PC-3 (cell line): ENCODE measurements at regions of chr5 and their contacts with region 1.

Region 1: GRCh38 chr5:122723606-122724352 is 51.1 kb upstream of the SNX2 start:
- DNase-seq: peak; percentile 79
- ATAC-seq: peak; percentile 71
- H3K4me3 ChIP-seq: peak overlapping the region; percentile 39
- H3K27ac ChIP-seq: peak overlapping the region; percentile 66
- H3K4me1 ChIP-seq: peaks cover 30% of the 10 kb centered on the region
- H3K27me3 ChIP-seq: no peaks in the 10 kb centered on the region
- CTCF ChIP-seq: no peak

Region 2: DNA sequence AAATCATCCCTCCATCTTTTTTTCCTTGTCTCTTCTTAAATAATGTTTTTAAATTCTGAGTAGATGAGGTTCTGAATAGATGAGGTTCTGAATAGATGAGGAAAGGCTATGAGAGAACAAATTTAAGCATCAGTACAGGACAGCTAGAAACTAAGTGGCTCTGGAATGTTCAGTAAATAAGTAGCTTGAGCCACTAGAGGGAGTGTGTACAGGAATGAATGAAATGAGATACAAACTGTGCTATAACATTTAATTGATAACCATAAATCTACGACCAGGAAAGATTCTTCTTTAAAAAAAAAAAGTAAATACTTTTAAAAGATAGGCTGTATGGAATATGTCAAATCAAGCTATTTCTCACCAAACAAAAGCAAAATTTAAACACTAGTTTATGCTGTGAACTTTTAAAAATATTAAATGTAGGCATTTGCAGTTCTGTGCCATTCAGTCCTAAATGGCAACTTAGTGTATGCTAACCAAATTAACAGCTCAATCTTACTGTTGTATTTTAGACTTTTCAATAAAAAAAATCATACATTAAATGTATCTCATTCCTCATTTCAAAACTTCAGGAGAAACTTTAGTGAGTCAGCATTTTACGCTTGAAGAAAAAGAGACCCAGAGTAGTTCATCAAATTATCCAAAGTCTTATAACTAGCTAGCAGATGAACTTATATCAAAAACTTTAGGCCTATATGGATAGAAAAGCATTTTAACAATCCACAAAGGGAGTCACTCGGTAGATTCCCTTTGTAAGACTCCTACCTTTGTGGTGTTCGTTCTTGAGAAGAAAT is 19.3 kb before region 1 on chr5:
- CTCF ChIA-PET with region 1: no interaction called
- POLR2A ChIA-PET with region 1: no interaction called
- intact Hi-C with region 1: loop called (anchors 2 kb)
- DNase-seq: peak; percentile 70
- ATAC-seq: peak; percentile 80
- H3K4me3 ChIP-seq: no peak overlapping the region
- H3K27ac ChIP-seq: no peak overlapping the region
- H3K4me1 ChIP-seq: no peaks in the 10 kb centered on the region
- H3K27me3 ChIP-seq: no peaks in the 10 kb centered on the region
- CTCF ChIP-seq: peak; percentile 83

Region 3: GRCh38 chr5:122774861-122775549 is 51.2 kb after region 1 on chr5 and contains the start of gene SNX2:
- CTCF ChIA-PET with region 1: no interaction called
- POLR2A ChIA-PET with region 1: interaction called, 3 read pairs
- intact Hi-C with region 1: loop called (anchors 5 kb)
- DNase-seq: peak; percentile 85
- ATAC-seq: peak; percentile 88
- H3K4me3 ChIP-seq: peak within 1 kb of the TSS; percentile 92
- H3K27ac ChIP-seq: no peak within 1 kb of the TSS
- H3K4me1 ChIP-seq: peaks cover 10% of the 10 kb centered on the region; the same call in 1 of the 2 replicates
- H3K27me3 ChIP-seq: no peaks in the 10 kb centered on the region
- CTCF ChIP-seq: peak; percentile 22; the same call in 1 of the 2 replicates
- total RNA-seq, gene SNX2: 30.5 and 33.7 TPM in 2 replicates

Region 4: DNA sequence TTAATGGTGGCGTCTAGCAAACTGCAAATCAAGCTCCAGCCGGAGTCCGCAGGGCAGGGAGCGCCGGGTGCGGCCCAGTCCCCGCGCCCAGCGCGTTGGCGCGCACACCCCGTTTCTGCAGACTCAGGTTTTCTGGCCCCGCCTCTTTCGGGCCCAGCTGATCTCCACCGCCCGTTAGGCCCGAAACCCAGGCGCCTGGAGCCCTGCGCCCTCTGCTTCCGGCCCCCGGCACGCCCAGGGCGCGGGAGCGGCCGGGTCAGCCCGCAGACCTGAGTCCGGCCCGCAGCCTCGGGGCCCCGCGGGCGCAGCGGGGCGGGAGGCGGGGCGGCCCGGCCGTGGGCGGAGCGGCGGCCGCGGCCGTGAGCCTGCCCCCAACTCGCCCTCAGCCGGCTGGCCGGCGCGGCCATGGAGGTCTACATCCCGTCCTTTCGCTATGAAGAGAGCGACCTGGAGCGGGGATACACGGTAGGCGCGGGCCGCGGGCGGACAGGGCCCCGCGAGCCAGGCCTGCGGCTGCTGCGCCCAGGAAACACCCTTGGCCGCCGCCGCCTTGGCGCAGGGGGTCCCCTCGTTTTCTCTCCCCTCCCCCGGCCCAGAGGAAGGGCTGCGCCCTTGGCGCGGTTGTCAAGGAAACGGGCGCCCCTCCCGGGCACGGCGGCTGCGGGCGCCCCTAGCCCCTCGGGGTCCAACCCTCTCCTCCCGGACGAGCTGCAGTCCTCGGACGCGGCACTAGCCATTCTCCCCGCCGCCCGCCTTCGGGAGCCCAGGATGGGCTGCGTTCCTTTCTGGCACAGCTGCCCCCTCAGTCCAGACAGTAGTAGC is 121.7 kb after region 1 on chr5 and contains the start of gene SNX24:
- CTCF ChIA-PET with region 1: no interaction called
- POLR2A ChIA-PET with region 1: no interaction called
- intact Hi-C with region 1: loop called (anchors 1 kb)
- DNase-seq: peak; percentile 82
- ATAC-seq: peak; percentile 85
- H3K4me3 ChIP-seq: peak within 1 kb of the TSS; percentile 84
- H3K27ac ChIP-seq: peak within 1 kb of the TSS; percentile 43
- H3K4me1 ChIP-seq: peaks cover 47% of the 10 kb centered on the region
- H3K27me3 ChIP-seq: no peaks in the 10 kb centered on the region
- CTCF ChIP-seq: no peak
- total RNA-seq, gene SNX24: 7.4 and 10.3 TPM in 2 replicates

Region 5: GRCh38 chr5:123036391-123037103 is 312.8 kb after region 1 on chr5 and contains the start of gene PPIC:
- CTCF ChIA-PET with region 1: no interaction called
- POLR2A ChIA-PET with region 1: no interaction called
- intact Hi-C with region 1: loop called (anchors 10 kb)
- DNase-seq: peak; percentile 73
- ATAC-seq: peak; percentile 86
- H3K4me3 ChIP-seq: peak within 1 kb of the TSS; percentile 90
- H3K27ac ChIP-seq: peak within 1 kb of the TSS; percentile 47
- H3K4me1 ChIP-seq: 0 out of 2 replicates have a peak, but pooled peaks cover 8% of the 10 kb centered on the region
- H3K27me3 ChIP-seq: no peaks in the 10 kb centered on the region
- CTCF ChIP-seq: no peak
- total RNA-seq, gene PPIC: 8.8 and 14.6 TPM in 2 replicates